ENCODE measurements at regions of chr2 and their contacts with region 1.

Region 1: GRCh38 chr2:72150157-72150865 is 2.6 kb upstream of the CYP26B1 start:
- DNase-seq: peak; percentile 29
- H3K4me3 ChIP-seq: peak overlapping the region; percentile 21; the same call in 1 of the 2 replicates
- H3K27ac ChIP-seq: no peak overlapping the region
- H3K27me3 ChIP-seq: peaks cover 83% of the 10 kb centered on the region
- CTCF ChIP-seq: peak; percentile 79

Region 2: GRCh38 chr2:71609958-71610357 is 540.4 kb before region 1 on chr2:
- CTCF ChIA-PET with region 1: interaction called, 16 read pairs
- POLR2A ChIA-PET with region 1: interaction called, 8 read pairs
- DNase-seq: no peak
- H3K4me3 ChIP-seq: no peak overlapping the region
- H3K27ac ChIP-seq: no peak overlapping the region
- H3K27me3 ChIP-seq: peaks cover 31% of the 10 kb centered on the region
- CTCF ChIP-seq: peak; percentile 33

Region 3: GRCh38 chr2:71798266-71799012 is 351.9 kb before region 1 on chr2:
- CTCF ChIA-PET with region 1: interaction called, 56 read pairs
- POLR2A ChIA-PET with region 1: interaction called, 4 read pairs
- DNase-seq: no peak
- H3K4me3 ChIP-seq: no peak overlapping the region
- H3K27ac ChIP-seq: no peak overlapping the region
- H3K27me3 ChIP-seq: peaks cover 5% of the 10 kb centered on the region
- CTCF ChIP-seq: peak; percentile 74

Region 4: DNA sequence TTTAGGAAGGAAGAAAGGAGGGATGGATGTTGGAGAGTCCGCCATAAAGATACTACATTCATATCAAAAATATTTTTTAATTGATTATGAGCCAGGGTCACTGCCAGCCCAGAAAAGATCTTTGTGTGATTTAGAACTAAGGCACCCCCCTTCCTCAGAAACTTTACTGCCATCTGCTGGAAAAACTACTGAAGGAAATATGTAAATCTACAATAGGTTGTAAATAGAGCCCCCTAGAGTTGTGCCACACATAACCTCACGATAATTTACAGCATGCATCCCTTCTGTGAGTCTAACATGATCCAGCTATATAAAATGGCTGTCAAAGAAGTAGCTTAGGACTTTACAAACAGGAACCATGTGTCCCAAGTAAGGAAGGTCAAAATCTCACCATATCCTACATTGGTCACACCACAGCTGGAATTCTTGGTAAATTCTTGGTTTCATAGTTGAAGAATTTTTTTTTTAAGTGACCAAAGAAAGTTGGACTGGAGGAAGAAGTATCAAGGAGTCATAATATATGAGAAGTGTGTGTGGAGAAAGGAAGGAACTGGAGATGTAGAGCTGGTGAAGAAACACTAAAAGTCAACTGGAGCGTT is 155.1 kb before region 1 on chr2:
- CTCF ChIA-PET with region 1: no interaction called
- POLR2A ChIA-PET with region 1: no interaction called
- DNase-seq: no peak
- H3K4me3 ChIP-seq: no peak overlapping the region
- H3K27ac ChIP-seq: no peak overlapping the region
- H3K27me3 ChIP-seq: peaks cover 2% of the 10 kb centered on the region
- CTCF ChIP-seq: peak; percentile 44

Region 5: DNA sequence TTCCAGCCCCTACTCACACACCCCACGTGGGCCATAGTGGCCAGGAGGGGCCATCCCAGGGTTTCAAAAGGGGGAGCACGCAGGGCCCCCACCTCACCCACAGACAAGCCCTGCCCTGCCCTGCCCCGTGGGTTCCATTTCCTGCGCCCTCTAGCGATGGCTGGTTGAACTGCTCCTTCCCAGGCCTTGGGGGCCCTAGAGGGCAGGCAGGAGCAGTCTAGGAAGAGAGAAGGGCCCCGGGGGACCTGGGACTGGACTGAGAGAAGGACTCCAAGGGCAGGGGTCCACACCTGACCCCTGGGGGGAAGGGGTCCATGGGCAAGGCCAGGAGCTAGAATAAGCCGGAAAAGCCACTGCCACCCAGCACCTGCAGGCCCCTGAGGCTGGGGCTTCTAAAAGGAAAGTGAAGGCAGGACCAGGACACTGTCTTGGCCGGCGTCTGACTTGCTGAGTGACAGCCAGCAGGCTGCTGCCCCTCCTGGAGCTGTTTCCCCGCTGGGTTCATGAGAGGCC is 12.8 kb before region 1 on chr2:
- CTCF ChIA-PET with region 1: interaction called, 10 read pairs
- POLR2A ChIA-PET with region 1: no interaction called
- DNase-seq: no peak
- H3K4me3 ChIP-seq: no peak overlapping the region
- H3K27ac ChIP-seq: no peak overlapping the region
- H3K27me3 ChIP-seq: peaks cover 29% of the 10 kb centered on the region
- CTCF ChIP-seq: peak; percentile 92

Region 6: DNA sequence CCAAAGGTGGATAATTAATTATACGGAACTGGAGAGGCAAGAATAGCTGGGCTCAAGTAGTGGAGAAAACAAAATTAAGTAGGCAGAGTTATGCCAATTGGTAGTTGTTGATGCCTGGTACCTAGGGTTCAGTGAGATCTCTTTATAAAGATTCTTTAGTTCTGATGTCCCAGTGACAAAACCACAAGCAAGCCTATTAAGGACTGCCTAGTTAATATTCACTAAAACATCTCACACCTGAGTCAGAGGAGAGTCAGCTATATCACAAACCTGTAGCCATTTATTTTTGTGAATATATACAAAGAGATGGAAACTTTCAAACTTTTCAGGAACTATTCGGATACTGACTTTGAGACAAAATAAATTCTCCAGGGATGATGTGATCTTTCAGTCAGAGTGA is 211.2 kb after region 1 on chr2:
- CTCF ChIA-PET with region 1: no interaction called
- POLR2A ChIA-PET with region 1: no interaction called
- DNase-seq: no peak
- H3K4me3 ChIP-seq: no peak overlapping the region
- H3K27ac ChIP-seq: no peak overlapping the region
- H3K27me3 ChIP-seq: no peaks in the 10 kb centered on the region
- CTCF ChIP-seq: no peak

Region 7: DNA sequence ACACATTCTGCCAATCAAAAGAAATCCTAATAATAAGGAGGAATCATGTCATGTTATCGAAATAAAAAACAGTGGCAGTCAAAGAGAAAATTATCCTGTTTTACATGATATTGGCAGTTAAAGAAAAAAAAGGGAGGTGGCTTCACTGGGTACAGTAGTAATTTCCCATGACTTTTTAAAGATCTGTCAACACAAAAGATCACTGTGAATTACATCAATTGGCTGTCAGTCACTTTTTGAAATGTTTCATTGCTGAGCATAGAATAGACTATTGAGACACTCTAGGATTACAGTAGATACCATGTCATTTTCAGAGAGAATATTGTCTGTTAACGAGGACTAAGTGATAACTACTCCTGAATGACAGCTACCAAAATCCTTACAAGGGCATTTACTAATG is 333.0 kb after region 1 on chr2:
- CTCF ChIA-PET with region 1: no interaction called
- POLR2A ChIA-PET with region 1: no interaction called
- DNase-seq: no peak
- H3K4me3 ChIP-seq: no peak overlapping the region
- H3K27ac ChIP-seq: no peak overlapping the region
- H3K27me3 ChIP-seq: no peaks in the 10 kb centered on the region
- CTCF ChIP-seq: no peak

Region 8: GRCh38 chr2:72579591-72580180 is 429.4 kb after region 1 on chr2:
- CTCF ChIA-PET with region 1: interaction called, 40 read pairs
- POLR2A ChIA-PET with region 1: no interaction called
- DNase-seq: peak; percentile 11
- H3K4me3 ChIP-seq: no peak overlapping the region
- H3K27ac ChIP-seq: no peak overlapping the region
- H3K27me3 ChIP-seq: no peaks in the 10 kb centered on the region
- CTCF ChIP-seq: peak; percentile 71

Region 9: GRCh38 chr2:72619626-72620025 is 469.3 kb after region 1 on chr2:
- CTCF ChIA-PET with region 1: no interaction called
- POLR2A ChIA-PET with region 1: no interaction called
- DNase-seq: no peak
- H3K4me3 ChIP-seq: no peak overlapping the region
- H3K27ac ChIP-seq: no peak overlapping the region
- H3K27me3 ChIP-seq: no peaks in the 10 kb centered on the region
- CTCF ChIP-seq: no peak

Measured in AG04450 (cell line).